ENCODE measurements at regions of chr7 and their contacts with region 1.

Region 1: GRCh38 chr7:90346336-90347125 is at the start of gene GTPBP10:
- DNase-seq: peak; percentile 87
- ATAC-seq: peak; percentile 91
- H3K4me3 ChIP-seq: peak within 1 kb of the TSS; percentile 82 to 97 (median 89)
- H3K27ac ChIP-seq: peak within 1 kb of the TSS; percentile 97
- H3K4me1 ChIP-seq: peaks cover 33% of the 10 kb centered on the region
- H3K27me3 ChIP-seq: no peaks in the 10 kb centered on the region; a peak in 1 of 5 replicates
- CTCF ChIP-seq: peak; percentile 87
- EP300 ChIP-seq: 0 out of 4 replicates have a peak, but pooled peaks of 1 of the 2 experiments have one; percentile 8
- POLR2A ChIP-seq: peak; percentile 97 to 98
- RAD21 ChIP-seq: peak; percentile 43
- total RNA-seq, gene GTPBP10: 38.7 and 54.6 TPM in 2 replicates

Region 2: DNA sequence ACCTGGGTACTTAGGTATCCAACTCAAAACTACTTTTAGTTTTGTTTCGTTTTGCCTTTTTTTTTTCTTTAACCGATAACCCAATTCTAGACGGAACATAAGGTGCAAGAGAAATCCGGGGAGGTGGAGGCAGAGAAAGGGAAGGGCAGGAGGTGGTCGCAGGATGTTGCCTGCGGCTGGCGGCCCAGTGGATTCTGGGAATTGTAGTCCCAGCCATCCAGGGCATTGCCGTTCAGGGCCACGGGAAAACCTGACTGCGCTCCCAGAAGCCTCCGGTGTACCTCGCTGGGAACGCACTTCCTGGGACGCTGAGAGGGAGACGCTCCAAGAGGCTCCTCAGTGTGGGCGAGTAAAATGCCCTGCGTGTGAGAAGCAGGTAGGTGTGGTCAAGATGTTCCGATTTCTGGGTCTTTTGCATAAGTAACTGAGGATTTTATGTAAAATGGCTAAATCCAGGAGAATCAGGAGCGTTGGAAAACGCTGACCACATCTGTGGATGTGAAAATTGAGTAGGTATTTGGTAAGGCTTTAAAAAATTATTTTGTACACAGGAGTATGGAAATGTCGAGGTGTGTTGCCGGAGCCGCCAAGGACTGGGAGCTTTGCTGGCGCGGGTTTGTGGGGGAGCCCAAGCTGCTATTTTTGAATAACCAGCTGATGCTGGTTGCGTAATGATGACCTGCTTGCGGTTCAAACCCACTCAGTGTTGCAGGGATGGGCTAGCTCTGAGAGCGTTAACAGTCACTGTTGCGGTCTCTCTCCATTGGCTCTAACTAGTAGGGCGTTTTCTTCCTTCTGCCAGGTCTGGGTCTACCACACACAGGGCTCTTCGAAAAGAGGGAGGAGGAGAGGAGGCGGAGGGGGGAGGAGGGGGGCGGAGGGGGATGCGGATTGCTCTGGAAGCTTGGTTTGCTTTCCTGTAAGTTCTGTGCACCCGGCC is 56.9 kb after region 1 on chr7 and contains the start of gene CLDN12:
- CTCF ChIA-PET with region 1: no interaction called
- POLR2A ChIA-PET with region 1: interaction called, 6 read pairs
- in situ Hi-C with region 1: loop called (anchors 5 kb)
- intact Hi-C with region 1: loop called (anchors 1 kb)
- DNase-seq: peak; percentile 88
- ATAC-seq: peak; percentile 97
- H3K4me3 ChIP-seq: peak within 1 kb of the TSS; percentile 67 to 78 (median 68)
- H3K27ac ChIP-seq: peak within 1 kb of the TSS; percentile 83
- H3K4me1 ChIP-seq: peaks cover 43% of the 10 kb centered on the region
- H3K27me3 ChIP-seq: no peaks in the 10 kb centered on the region; a peak in 1 of 5 replicates
- CTCF ChIP-seq: 0 out of 2 replicates have a peak, but pooled peaks have one; percentile 2
- EP300 ChIP-seq: no peak; a peak in 1 of 4 replicates
- POLR2A ChIP-seq: peak; percentile 85
- RAD21 ChIP-seq: no peak
- total RNA-seq, gene CLDN12: 32.0 and 44.1 TPM in 2 replicates

Region 3: DNA sequence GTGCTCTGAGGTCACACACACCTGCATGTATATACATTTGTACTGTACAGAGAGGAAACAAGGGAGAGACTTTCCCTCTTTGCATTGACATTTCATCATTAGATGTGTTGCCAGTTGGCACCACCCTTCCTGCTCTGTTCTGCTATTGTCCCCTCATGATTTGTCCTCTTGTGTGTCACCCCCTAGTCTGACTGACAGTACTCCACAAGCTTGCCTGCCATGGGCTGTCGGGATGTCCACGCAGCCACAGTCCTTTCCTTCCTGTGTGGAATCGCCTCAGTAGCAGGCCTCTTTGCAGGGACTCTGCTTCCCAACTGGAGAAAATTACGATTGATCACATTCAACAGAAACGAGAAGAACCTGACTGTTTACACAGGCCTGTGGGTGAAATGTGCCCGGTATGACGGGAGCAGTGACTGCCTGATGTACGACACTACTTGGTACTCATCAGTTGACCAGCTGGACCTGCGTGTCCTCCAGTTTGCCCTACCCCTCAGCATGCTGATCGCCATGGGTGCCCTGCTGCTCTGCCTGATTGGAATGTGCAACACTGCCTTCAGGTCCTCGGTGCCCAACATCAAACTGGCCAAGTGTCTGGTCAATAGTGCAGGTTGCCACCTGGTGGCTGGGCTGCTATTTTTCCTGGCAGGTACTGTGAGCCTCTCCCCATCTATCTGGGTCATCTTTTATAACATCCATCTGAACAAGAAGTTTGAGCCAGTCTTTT is 66.1 kb after region 1 on chr7:
- CTCF ChIA-PET with region 1: interaction called, 3 read pairs
- POLR2A ChIA-PET with region 1: interaction called, 3 read pairs
- in situ Hi-C with region 1: loop called (anchors 5 kb)
- intact Hi-C with region 1: loop called (anchors 1 kb)
- DNase-seq: peak; percentile 44
- ATAC-seq: peak; percentile 94
- H3K4me3 ChIP-seq: no peak overlapping the region
- H3K27ac ChIP-seq: no peak overlapping the region
- H3K4me1 ChIP-seq: peaks cover 50% of the 10 kb centered on the region
- H3K27me3 ChIP-seq: no peaks in the 10 kb centered on the region
- CTCF ChIP-seq: peak; percentile 67
- EP300 ChIP-seq: no peak
- POLR2A ChIP-seq: no peak
- RAD21 ChIP-seq: 0 out of 2 replicates have a peak, but pooled peaks have one; percentile 22